CD4-positive, alpha-beta T cell (primary cell): ENCODE measurements at regions of chr12 and their contacts with region 1.

Region 1: GRCh38 chr12:2794736-2795289 is at the start of gene FKBP4:
- DNase-seq: peak; percentile 78 to 96 (median 86)
- ATAC-seq: peak; percentile 89
- H3K4me3 ChIP-seq: peak within 1 kb of the TSS; percentile 71
- H3K4me3 Mint-ChIP-seq: peak within 1 kb of the TSS; percentile 96
- H3K27ac ChIP-seq: peak within 1 kb of the TSS; percentile 19 to 64
- H3K27ac Mint-ChIP-seq: peak within 1 kb of the TSS; percentile 83
- H3K4me1 ChIP-seq: peaks cover 26% of the 10 kb centered on the region
- H3K4me1 Mint-ChIP-seq: peaks cover 34% of the 10 kb centered on the region
- H3K27me3 ChIP-seq: no peaks in the 10 kb centered on the region
- H3K27me3 Mint-ChIP-seq: no peaks in the 10 kb centered on the region
- CTCF ChIP-seq: no peak
- total RNA-seq, gene FKBP4: 35.7 to 40.3 TPM

Region 2: GRCh38 chr12:2004113-2004929 is 790.5 kb before region 1 on chr12 and contains the start of gene DCP1B:
- CTCF ChIA-PET with region 1: no interaction called
- POLR2A ChIA-PET with region 1: no interaction called
- intact Hi-C with region 1: loop called in 1 of 2 experiments (anchors 10 kb)
- DNase-seq: peak; percentile 84 to 98 (median 90)
- ATAC-seq: peak; percentile 98
- H3K4me3 ChIP-seq: peak within 1 kb of the TSS; percentile 97
- H3K4me3 Mint-ChIP-seq: peak within 1 kb of the TSS; percentile 97
- H3K27ac ChIP-seq: peak within 1 kb of the TSS; percentile 83 to 91
- H3K27ac Mint-ChIP-seq: peak within 1 kb of the TSS; percentile 95
- H3K4me1 ChIP-seq: peaks cover 19% of the 10 kb centered on the region
- H3K4me1 Mint-ChIP-seq: peaks cover 34% of the 10 kb centered on the region
- H3K27me3 ChIP-seq: no peaks in the 10 kb centered on the region
- H3K27me3 Mint-ChIP-seq: no peaks in the 10 kb centered on the region
- CTCF ChIP-seq: no peak
- total RNA-seq, gene DCP1B: 4.3 to 4.6 TPM

Region 3: DNA sequence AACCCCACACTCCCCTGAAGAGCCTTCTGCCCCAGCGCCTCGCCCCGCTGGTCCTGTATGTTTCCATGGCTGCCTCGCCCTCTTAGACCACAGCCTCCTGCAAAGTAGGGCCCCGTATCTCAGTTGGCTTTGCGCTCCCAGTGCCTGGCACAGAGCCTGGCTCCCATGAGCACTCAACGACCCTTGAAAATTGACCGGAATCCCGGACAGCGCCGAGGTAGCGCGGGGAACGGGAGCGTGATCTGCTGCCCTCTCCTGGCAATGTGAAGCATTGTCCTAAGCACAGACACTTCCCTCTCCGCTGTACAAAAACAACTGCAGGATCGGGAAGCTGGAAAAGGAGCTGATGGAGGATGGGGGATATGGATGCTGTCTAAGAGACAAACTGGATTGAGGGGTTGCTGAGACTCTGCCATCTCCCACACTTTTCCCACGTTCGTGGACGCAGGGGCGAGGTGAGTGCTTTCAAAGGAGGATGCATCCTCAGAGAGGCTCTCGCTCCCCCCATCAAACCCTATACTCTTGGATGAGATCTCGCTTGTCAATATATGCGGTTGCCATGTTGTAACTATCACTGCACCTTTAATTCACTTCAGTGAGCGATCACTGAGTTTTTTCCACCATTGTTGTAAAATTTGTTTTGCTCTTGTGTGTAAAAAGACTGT is 10.7 kb before region 1 on chr12:
- CTCF ChIA-PET with region 1: interaction called, 15 read pairs
- POLR2A ChIA-PET with region 1: interaction called, 4 read pairs
- intact Hi-C with region 1: no loop called
- DNase-seq: peak in 13 of 14 experiments; percentile 12 to 72 (median 34)
- ATAC-seq: peak; percentile 91
- H3K4me3 ChIP-seq: peak overlapping the region; percentile 29
- H3K4me3 Mint-ChIP-seq: peak overlapping the region; percentile 80
- H3K27ac ChIP-seq: no peak overlapping the region
- H3K27ac Mint-ChIP-seq: no peak overlapping the region
- H3K4me1 ChIP-seq: peaks cover 10% of the 10 kb centered on the region
- H3K4me1 Mint-ChIP-seq: peaks cover 9% of the 10 kb centered on the region
- H3K27me3 ChIP-seq: no peaks in the 10 kb centered on the region
- H3K27me3 Mint-ChIP-seq: peaks cover 19% of the 10 kb centered on the region
- CTCF ChIP-seq: peak; percentile 90

Region 4: DNA sequence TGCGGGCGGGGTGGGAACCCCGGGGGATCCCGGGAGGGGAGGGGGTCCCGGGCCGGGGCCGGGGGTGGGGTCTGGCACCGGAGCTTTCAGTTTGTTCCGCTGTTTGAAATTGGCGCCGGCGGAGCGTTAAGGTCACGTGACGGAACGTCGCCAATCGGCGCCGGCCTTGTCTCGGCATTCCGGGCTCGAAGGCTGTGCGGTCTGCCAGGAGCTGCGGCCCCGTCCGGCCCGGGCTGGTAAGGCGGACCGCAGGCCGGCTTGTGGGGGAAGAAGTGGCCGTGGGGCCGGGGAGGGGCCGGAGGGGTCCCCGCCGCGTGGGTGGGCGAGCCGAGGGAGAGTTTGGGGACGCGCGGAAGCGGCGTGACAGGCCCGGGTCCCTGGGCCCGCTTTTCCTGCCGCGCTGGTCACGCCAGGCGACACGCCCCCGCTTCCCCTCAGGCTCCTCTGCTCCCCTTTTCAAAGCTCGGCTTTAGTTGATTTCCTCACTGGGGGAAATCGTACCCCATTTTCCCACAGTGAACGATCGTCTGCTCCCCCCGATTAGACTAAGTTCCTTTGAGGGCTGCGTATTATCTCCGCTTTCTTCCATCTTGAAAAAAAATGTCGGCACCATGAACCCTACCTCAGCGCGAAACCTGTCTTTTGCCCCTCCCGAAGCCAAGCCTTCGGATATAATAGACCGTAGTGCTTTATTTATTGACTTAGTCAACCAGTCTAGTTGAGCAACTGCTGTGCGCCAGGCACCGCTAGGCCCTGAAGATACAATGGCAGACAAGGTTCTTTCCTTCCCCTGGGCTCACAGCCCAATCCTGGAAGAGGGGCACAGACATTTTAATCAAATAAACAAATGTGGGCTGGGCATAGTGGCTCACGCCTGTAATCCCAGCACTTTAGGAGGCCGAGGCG is 82.5 kb after region 1 on chr12 and contains the starts of genes FOXM1 and RHNO1:
- CTCF ChIA-PET with region 1: no interaction called
- POLR2A ChIA-PET with region 1: interaction called, 19 read pairs
- intact Hi-C with region 1: loop called in 1 of 2 experiments (anchors 5 kb)
- DNase-seq: peak; percentile 75 to 92 (median 84)
- ATAC-seq: peak; percentile 80
- H3K4me3 ChIP-seq: peak within 1 kb of the TSS; percentile 80
- H3K4me3 Mint-ChIP-seq: peak within 1 kb of the TSS; percentile 97
- H3K27ac ChIP-seq: peak within 1 kb of the TSS; percentile 81 to 86
- H3K27ac Mint-ChIP-seq: peak within 1 kb of the TSS; percentile 99
- H3K4me1 ChIP-seq: peaks cover 39% of the 10 kb centered on the region
- H3K4me1 Mint-ChIP-seq: peaks cover 30% of the 10 kb centered on the region
- H3K27me3 ChIP-seq: no peaks in the 10 kb centered on the region
- H3K27me3 Mint-ChIP-seq: no peaks in the 10 kb centered on the region
- CTCF ChIP-seq: no peak
- total RNA-seq, gene FOXM1: 0.59 to 0.80 TPM
- total RNA-seq, gene RHNO1: 26.5 to 31.3 TPM

Region 5: GRCh38 chr12:3073438-3074250 is 278.8 kb after region 1 on chr12:
- CTCF ChIA-PET with region 1: no interaction called
- POLR2A ChIA-PET with region 1: no interaction called
- intact Hi-C with region 1: loop called in 1 of 2 experiments (anchors 10 kb)
- DNase-seq: peak; percentile 72 to 90 (median 82)
- ATAC-seq: peak; percentile 53
- H3K4me3 ChIP-seq: no peak overlapping the region
- H3K4me3 Mint-ChIP-seq: peak overlapping the region; percentile 65
- H3K27ac ChIP-seq: no peak overlapping the region
- H3K27ac Mint-ChIP-seq: no peak overlapping the region
- H3K4me1 ChIP-seq: peaks cover 25% of the 10 kb centered on the region
- H3K4me1 Mint-ChIP-seq: peaks cover 14% of the 10 kb centered on the region
- H3K27me3 ChIP-seq: peaks cover 3% of the 10 kb centered on the region in 2 experiments
- H3K27me3 Mint-ChIP-seq: peaks cover 7% of the 10 kb centered on the region
- CTCF ChIP-seq: peak; percentile 93